Testis (tissue), 5 donors: ENCODE measurements at regions of chr21 and their contacts with region 1.

Region 1: GRCh38 chr21:32257962-32258785 is 20.7 kb downstream of the MIS18A start:
- DNase-seq: peak; percentile 87
- H3K4me3 ChIP-seq: no peak overlapping the region
- H3K27ac ChIP-seq: no peak overlapping the region
- H3K4me1 ChIP-seq: no peaks in the 10 kb centered on the region
- H3K27me3 ChIP-seq: no peaks in the 10 kb centered on the region
- CTCF ChIP-seq: peak; percentile 62 to 86 (median 71)
- POLR2A ChIP-seq: no peak

Region 2: GRCh38 chr21:31772674-31773555 is 485.3 kb before region 1 on chr21:
- intact Hi-C with region 1: loop called (anchors 10 kb)
- DNase-seq: no peak
- H3K4me3 ChIP-seq: no peak overlapping the region
- H3K27ac ChIP-seq: no peak overlapping the region
- H3K4me1 ChIP-seq: no peaks in the 10 kb centered on the region
- H3K27me3 ChIP-seq: no peaks in the 10 kb centered on the region
- CTCF ChIP-seq: no peak
- POLR2A ChIP-seq: no peak

Region 3: DNA sequence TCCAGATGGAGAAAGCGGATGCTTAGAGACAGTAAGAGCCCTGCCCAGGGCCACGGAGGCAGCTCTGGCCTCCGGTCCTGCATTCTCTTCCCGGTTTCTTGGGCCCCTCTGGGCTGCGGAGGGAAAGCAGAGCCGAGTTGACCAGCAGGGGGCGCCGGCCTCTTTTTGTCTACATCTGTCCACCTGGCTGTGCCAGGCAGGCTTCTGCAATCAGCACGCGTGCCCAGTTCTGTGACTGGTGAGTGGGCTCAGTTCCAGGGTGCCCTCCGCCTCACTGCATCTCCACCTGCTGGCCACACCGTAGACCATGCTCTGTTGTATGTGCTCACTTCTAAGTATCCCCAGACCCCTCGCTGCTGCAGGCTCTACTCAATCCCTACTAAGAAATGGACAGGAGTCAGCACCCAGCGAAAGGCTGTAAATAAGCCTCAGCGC is 392.1 kb before region 1 on chr21:
- intact Hi-C with region 1: loop called (anchors 10 kb)
- DNase-seq: peak; percentile 95
- H3K4me3 ChIP-seq: no peak overlapping the region
- H3K27ac ChIP-seq: no peak overlapping the region
- H3K4me1 ChIP-seq: no peaks in the 10 kb centered on the region
- H3K27me3 ChIP-seq: no peaks in the 10 kb centered on the region
- CTCF ChIP-seq: peak; percentile 74 to 94 (median 87)
- POLR2A ChIP-seq: no peak

Region 4: DNA sequence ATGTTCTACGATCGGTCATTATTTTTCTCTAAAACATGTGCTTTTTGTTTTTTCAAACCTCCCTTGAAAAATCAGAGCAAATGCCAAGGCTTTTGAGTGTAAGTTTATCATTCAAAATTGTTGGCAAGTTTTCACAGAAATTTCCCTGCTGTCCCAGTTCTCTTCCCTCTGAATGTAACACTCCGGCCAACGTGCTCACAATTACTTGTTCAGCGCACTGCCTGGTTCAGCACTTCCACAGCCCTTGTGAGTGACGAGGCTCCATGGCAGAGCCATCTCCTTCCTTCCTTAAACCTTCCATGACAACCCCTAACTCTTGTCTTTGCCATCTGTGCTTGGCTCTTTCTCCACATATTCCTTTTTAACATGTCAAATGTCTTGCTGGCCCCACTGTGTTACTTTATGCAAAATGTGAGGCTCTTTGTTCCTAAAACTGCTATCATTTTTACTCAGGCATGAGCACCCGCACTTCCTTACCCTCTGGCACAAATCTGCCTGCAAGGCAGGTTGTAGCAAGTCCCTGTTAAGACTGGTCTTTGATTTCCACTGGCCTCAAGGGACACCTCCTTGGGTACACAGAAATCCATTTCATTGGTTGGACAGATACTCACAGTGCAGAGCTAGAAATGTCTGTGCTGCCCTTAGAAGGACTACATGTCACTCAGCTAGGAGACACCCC is 242.6 kb before region 1 on chr21:
- intact Hi-C with region 1: no loop called
- DNase-seq: peak; percentile 41
- H3K4me3 ChIP-seq: no peak overlapping the region
- H3K27ac ChIP-seq: no peak overlapping the region
- H3K4me1 ChIP-seq: peaks cover 9% of the 10 kb centered on the region
- H3K27me3 ChIP-seq: no peaks in the 10 kb centered on the region
- CTCF ChIP-seq: no peak
- POLR2A ChIP-seq: no peak